ENCODE measurements at regions of chr16 and their contacts with region 1.

Region 1: GRCh38 chr16:31458844-31459721 is at the start of gene ARMC5:
- DNase-seq: peak; percentile 97 to 98
- ATAC-seq: peak; percentile 87 to 93 (median 90)
- H3K4me3 ChIP-seq: peak within 1 kb of the TSS; percentile 37 to 90 (median 75)
- H3K27ac ChIP-seq: peak within 1 kb of the TSS; percentile 95 to 100 (median 98)
- H3K4me1 ChIP-seq: peaks cover 9 to 55% (median 48%) of the 10 kb centered on the region in 9 donors
- H3K27me3 ChIP-seq: no peaks in the 10 kb centered on the region
- CTCF ChIP-seq: peak; percentile 19 to 83 (median 61)
- total RNA-seq, gene ARMC5: 3.8 to 7.8 (median 6.4) TPM

Region 2: DNA sequence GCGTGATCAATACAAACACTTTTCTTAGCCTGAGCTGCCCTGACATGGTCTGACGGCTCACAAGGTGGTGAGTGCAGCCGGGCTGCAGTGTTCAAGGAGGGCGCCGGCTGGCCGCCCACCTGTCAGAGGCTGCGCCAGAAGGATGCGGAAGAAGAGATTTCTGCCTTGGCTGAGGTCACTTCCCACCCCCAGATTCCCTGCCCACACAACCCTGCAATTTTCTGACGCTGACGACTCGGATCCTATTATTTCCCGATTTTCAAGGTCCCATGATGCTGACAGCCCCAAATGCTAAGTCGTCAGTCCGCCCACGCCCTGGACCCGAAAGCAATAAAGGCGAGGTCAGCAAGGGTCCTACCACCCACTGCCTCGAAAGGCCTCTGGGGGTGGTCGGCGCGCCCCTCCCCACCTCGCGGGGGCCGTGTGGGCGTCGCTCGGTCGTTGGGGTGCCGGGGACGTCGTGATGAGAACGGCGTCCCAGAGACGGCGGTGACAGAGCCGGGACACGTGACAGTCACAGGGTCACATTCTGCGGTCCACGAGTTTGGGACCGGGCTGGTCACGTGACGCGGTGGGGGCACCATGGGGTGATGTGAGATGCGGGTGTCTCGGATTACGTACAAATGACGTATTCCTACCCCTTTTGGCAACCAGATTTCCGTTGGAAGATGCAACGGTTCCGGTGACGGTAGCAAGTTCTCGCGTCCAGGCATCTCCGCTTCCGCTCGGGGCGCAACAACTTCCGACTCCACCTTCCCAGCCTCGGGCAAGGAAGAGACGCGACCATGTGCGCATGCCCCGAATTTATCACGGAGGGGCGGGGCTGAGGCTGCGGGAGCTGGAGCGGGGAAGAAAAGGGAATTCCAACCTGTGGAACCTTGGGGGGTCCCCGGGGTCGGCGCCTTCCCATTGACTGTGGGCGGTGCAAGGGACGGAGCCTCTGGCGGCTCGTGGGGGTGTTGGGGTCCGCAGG is 426.1 kb before region 1 on chr16 and contains the start of gene STX4:
- intact Hi-C with region 1: loop called in 1 of 10 experiments (anchors 1 kb)
- DNase-seq: peak; percentile 98 to 99
- ATAC-seq: peak; percentile 92 to 98 (median 96)
- H3K4me3 ChIP-seq: peak within 1 kb of the TSS; percentile 74 to 96 (median 90)
- H3K27ac ChIP-seq: peak within 1 kb of the TSS; percentile 90 to 99 (median 96)
- H3K4me1 ChIP-seq: peaks cover 0 to 40% (median 20%) of the 10 kb centered on the region in 9 donors
- H3K27me3 ChIP-seq: no peaks in the 10 kb centered on the region
- CTCF ChIP-seq: peak in 1 of 9 donors; percentile 13
- total RNA-seq, gene STX4: 31.8 to 53.8 (median 38.6) TPM

Region 3: DNA sequence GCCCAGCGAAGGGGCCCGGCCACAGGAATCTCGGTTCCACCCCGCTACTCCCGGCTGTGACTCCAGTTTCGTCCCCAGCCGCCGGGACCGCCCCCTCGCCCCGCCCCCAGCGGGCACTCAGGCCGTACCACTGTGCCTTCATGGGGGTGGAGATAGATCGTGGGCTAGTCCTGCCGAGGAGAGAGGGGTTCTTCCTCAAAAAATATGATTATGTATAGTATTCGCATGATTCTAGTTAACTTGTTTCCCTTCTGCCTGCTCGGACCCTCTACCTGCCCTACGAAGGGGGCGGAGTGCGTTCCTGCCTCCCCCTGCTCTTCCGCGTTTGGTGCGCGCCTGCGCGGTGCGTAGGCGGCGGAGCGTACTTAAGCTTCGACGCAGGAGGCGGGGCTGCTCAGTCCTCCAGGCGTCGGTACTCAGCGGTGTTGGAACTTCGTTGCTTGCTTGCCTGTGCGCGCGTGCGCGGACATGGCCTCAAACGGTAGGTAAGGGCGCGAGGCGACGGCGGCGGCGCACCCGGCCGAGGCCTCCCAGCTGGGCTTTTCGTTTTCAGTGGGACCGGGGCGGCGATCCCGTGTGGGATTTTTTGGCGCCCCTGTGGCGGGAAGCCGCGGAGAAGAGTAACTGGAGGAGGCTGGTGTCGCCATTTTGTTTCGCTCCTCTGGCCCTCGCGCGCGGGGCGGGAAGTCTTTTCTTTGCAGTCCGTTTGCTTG is 279.2 kb before region 1 on chr16 and contains the start of gene FUS:
- intact Hi-C with region 1: loop called in 3 of 10 experiments (anchors 10 kb)
- DNase-seq: peak; percentile 90 to 92
- ATAC-seq: peak; percentile 84 to 93 (median 90)
- H3K4me3 ChIP-seq: peak within 1 kb of the TSS; percentile 71 to 94 (median 83)
- H3K27ac ChIP-seq: peak within 1 kb of the TSS; percentile 89 to 99 (median 94)
- H3K4me1 ChIP-seq: peaks cover 10 to 57% (median 42%) of the 10 kb centered on the region in 9 donors
- H3K27me3 ChIP-seq: no peaks in the 10 kb centered on the region
- CTCF ChIP-seq: no peak
- total RNA-seq, gene FUS: 127 to 174 (median 140) TPM

Region 4: DNA sequence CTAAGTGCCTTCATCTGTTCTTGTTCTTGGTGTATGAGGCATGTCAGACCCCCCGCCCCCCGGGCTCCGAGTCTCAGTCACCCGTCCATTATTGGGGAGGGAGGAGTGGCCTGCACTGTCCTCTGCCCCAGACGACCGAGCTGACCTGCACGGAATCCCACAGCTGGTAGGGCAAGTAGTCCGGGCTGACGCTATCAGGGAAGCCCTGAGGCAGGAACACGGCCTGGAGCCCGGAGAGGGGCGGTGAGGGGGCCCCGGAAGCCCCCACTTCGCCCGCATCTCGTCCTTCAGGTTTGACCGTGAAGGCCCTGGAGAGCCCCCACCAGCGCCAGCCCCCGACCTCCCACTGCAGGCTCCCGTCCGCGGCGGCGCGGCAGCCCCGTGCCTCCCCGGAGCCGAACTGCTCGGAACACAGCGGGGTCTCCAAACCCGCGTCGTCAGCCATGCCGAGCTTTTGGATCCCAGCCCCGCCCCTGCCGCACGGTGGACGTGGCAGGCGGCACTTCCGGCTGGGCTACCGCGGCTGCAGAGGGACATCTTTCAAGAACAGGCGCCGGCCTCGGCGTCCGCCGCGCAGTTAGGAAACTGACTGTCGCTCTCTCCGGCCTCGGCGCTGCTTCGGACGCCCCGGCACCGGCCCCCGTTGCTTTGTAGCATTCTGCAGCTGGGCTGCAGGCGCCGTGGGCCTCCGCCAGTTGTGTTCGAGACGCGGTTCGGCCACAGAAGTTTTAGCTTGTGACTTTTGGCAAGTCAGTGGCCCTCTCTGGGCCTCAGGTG is 49.0 kb after region 1 on chr16 and contains the start of gene RUSF1:
- intact Hi-C with region 1: loop called in 3 of 10 experiments (anchors 1 to 5 kb)
- DNase-seq: peak; percentile 92 to 93
- ATAC-seq: peak; percentile 96 to 97 (median 97)
- H3K4me3 ChIP-seq: peak within 1 kb of the TSS; percentile 79 to 98 (median 88)
- H3K27ac ChIP-seq: peak within 1 kb of the TSS; percentile 83 to 99 (median 95)
- H3K4me1 ChIP-seq: peaks cover 5 to 58% (median 48%) of the 10 kb centered on the region in 9 donors
- H3K27me3 ChIP-seq: no peaks in the 10 kb centered on the region
- CTCF ChIP-seq: no peak
- total RNA-seq, gene RUSF1: 21.9 to 28.0 (median 24.4) TPM

Region 5: DNA sequence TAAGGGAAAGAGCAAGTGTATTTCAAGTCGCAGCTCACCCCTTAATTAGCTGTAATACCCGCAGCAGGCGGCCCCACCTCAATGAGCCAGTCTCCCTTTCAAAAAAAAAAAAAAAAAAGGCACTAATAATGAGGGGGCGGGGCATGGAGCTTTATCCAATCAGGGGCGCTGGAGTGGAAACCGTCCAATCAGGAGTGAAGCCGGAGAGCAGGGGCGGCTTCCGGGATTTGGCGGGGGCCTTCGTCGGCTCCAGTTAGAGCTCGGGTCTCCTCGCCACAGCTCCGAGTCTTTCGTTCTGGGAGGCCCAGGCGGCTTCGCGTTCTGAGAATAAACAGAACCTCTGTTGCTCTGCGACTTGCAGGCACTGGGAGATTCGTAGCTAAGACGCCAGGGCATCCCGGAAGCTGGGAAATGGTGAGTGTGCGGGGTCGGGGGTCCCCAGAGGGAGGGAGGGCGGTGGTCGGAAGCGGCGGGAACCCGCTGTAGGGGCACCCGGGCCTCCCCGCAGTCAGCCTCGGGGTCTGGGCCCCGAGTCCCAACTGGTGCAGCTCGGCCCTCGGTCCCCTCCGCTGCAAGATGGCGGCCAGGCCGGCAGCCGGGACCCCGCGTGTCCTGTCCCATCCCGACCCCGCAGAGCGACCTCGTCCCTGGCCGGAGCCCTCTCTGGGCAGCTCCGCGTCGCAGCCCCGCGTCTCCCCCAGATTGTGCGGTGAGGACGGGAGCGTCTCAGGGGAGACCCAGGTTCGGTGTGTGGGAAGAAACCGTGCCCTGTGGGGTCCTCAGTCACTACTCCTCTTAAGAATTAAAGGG is 414.7 kb after region 1 on chr16 and contains the start of gene ZNF267:
- intact Hi-C with region 1: loop called in 6 of 10 experiments (anchors 5 to 10 kb)
- DNase-seq: peak; percentile 91 to 96
- ATAC-seq: peak; percentile 95 to 98 (median 96)
- H3K4me3 ChIP-seq: peak within 1 kb of the TSS; percentile 79 to 98 (median 91)
- H3K27ac ChIP-seq: peak within 1 kb of the TSS; percentile 58 to 99 (median 87)
- H3K4me1 ChIP-seq: peaks cover 0 to 74% (median 31%) of the 10 kb centered on the region in 9 donors
- H3K27me3 ChIP-seq: no peaks in the 10 kb centered on the region
- CTCF ChIP-seq: no peak
- total RNA-seq, gene ZNF267: 4.0 to 13.5 (median 5.7) TPM